ENCODE measurements at regions of chr4 and their contacts with region 1.

Region 1: DNA sequence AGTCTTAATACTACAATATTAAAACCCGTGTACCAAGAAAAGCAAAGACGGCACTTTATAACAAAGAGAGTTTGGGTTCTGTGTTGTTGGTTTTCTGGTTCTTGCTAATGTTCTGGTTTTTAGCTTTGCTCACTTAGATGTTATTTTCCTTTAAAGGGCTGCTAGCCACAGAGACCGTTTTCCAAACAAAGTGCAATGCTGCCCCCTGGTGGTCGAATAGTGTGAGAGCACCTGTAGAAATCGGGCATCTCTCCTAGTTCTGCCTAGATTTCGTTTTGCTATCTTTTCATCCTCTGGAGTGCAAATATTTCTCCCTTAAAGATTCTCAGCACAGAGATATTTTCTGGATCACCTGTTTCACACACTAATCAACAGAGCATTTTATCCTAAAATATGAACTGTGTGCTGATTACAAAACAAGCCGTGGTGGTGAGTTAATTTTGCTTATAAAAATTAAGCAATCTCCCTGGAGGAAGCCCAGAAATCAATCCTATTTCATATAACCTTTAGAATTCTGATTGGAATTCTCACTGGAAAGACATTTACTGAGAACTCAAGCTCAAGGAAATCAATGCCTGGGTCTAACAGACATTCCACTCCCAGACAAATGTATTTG is 334.5 kb upstream of the NOCT start:
- DNase-seq: peak; percentile 87
- ATAC-seq: peak; percentile 65
- H3K4me3 Mint-ChIP-seq: no peak overlapping the region
- H3K27ac Mint-ChIP-seq: no peak overlapping the region
- H3K4me1 Mint-ChIP-seq: no peaks in the 10 kb centered on the region
- H3K27me3 Mint-ChIP-seq: peaks cover 13% of the 10 kb centered on the region

Region 2: DNA sequence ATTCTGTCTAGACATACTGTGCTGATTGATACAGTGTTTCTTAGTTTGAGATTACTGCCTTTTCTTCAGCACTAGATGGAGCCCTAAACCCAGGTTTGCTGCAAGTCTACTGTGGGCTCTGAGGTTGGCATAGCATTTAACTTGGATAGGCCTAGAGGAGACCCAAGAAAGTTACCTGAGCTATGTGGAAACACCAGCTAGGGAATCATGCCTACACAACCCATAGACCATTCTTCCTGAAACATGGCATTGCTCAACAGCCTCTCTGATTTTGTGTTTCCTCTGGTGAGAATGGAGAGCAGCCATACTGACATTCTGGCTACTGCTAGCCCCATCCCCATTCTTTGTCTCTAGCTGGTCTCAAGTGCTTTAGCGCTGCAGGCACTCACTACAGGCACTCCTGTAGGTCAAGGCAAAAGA is 861.1 kb before region 1 on chr4:
- CTCF ChIA-PET with region 1: interaction called, 5 read pairs
- POLR2A ChIA-PET with region 1: no interaction called
- intact Hi-C with region 1: loop called in 1 of 2 experiments (anchors 5 kb)
- DNase-seq: no peak
- ATAC-seq: peak; percentile 36
- H3K4me3 Mint-ChIP-seq: no peak overlapping the region
- H3K27ac Mint-ChIP-seq: no peak overlapping the region
- H3K4me1 Mint-ChIP-seq: no peaks in the 10 kb centered on the region
- H3K27me3 Mint-ChIP-seq: no peaks in the 10 kb centered on the region

Region 3: DNA sequence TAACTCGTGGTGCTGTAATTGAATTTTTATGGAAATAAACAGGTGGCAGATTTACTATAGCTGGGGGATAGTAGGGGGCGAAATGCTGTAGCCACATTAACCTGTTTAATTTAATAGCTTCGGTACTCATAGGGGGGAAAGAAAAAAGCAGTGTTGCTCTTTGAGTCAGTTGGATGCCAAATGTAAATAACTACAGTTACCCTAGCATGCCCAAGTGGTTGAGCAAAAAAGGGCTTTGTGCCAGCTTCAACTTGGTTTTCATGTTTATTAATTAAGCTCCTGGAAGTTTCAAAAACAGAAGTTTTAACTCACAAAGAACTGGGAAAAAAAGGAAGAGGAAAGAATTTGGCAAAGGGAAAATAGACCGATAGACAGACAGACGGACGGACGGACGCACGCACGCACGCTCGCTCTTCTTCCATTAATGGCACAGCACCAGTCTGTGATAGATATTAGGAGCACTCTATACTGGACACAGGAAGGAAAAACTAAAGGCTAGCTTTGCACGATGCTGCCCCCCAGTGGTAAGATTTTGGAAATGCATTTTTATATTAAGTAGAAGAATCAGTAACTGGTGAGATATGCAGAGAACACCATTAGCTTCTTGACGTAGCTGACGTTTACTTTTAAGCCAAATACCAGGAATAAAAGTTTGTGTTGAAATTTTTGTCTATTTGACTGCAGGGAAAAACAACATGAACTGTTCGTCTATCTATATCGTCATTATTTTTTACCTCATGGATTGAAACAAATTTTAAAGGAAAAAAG is 590.8 kb before region 1 on chr4:
- CTCF ChIA-PET with region 1: interaction called, 14 read pairs
- POLR2A ChIA-PET with region 1: no interaction called
- intact Hi-C with region 1: loop called in 1 of 2 experiments (anchors 1 kb)
- DNase-seq: peak; percentile 45
- ATAC-seq: no peak
- H3K4me3 Mint-ChIP-seq: no peak overlapping the region
- H3K27ac Mint-ChIP-seq: no peak overlapping the region
- H3K4me1 Mint-ChIP-seq: no peaks in the 10 kb centered on the region
- H3K27me3 Mint-ChIP-seq: peaks cover 5% of the 10 kb centered on the region

Region 4: GRCh38 chr4:138870737-138871554 is 189.8 kb after region 1 on chr4:
- CTCF ChIA-PET with region 1: interaction called, 18 read pairs
- POLR2A ChIA-PET with region 1: no interaction called
- intact Hi-C with region 1: loop called (anchors 2 kb)
- DNase-seq: peak; percentile 66
- ATAC-seq: peak; percentile 36
- H3K4me3 Mint-ChIP-seq: no peak overlapping the region
- H3K27ac Mint-ChIP-seq: no peak overlapping the region
- H3K4me1 Mint-ChIP-seq: no peaks in the 10 kb centered on the region
- H3K27me3 Mint-ChIP-seq: peaks cover 27% of the 10 kb centered on the region